Tibial artery (tissue), 4 donors: ENCODE measurements at regions of chr1 and their contacts with region 1.

Region 1: DNA sequence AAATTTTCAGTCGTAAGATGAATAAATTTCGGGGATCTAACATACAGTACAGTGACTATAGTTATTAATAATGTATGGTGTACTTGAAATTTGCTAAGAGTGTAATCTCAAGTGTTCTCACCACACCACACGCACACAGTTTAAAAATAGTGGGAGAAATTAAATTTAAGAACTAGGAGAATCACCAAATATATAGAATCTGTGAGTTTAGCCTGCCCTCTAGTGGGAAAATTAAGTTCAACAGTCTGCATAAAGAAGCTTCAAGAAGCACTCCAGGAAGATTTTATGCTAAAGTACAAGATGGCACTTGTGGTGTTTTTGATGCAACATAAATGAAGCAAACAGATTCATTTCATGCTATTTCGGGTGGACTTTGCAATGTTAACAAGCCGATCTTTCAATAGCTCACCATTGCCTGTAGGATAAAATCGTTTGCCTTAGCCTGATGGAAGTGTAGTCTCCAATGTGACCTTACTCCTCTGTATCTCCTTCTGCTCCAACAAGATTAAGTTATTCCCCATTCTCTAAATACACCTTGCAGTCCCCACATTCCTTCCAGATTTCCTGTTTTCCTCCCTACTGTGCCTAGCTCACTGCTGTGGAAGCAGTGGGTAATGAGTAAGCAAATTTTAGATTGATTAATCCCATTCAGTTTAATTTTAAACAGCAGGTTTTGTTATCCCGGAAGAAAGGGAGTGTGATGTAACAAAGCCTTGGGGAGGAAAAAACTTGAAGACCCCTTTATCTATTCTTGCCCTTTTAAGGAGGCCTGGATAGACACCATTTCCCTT is 8.7 kb upstream of the PIK3C2B start:
- DNase-seq: no peak
- H3K4me3 ChIP-seq: no peak overlapping the region
- H3K27ac ChIP-seq: no peak overlapping the region
- H3K4me1 ChIP-seq: peaks cover 0 to 15% (median 1%) of the 10 kb centered on the region in 4 donors
- H3K27me3 ChIP-seq: no peaks in the 10 kb centered on the region
- CTCF ChIP-seq: peak; percentile 72 to 86

Region 2: DNA sequence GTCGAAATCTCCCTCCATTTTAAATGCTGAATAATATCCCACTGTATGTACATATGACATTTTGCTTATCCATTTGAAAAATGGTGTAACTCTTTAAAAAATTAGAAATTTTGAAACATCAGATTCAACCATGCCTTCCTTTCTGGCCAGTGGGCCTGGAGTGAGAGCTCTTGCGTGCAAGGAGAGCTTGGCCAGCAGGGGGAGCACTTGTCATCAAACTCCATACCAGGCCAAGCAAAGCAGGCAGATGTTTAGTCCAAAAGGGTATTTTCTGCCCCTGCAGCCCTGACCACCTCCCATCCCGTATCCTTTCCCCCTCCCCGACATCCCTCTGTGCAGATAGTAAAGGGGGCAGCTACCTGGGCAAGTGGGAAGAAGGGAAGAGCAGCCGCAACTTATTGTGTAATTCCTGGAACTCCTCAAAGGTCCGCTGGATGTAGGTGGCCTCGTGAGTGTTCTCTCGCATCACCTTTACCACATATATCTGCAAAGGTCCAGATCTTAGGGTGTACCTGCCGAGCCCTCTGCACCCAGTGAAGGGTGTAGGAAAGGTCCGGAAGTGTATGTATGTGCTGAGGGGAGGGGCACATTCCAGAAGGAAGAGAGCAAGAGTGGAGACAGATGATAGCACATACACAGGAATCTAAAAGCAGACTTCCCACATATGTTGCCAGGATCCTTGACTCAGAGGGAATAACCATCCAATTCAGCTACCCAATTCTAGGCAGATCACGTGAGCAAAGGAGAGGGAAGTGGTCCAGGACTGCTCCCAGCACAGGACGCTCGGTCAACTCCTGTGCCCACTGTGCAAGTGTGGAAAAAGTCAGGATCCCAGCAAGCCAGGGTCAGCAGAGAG is 71.8 kb before region 1 on chr1:
- intact Hi-C with region 1: loop called (anchors 5 kb)
- DNase-seq: peak; percentile 84 to 88
- H3K4me3 ChIP-seq: no peak overlapping the region
- H3K27ac ChIP-seq: peak overlapping the region; percentile 23 to 51
- H3K4me1 ChIP-seq: peaks cover 0 to 25% (median 12%) of the 10 kb centered on the region in 4 donors
- H3K27me3 ChIP-seq: no peaks in the 10 kb centered on the region
- CTCF ChIP-seq: peak; percentile 87 to 92

Region 3: DNA sequence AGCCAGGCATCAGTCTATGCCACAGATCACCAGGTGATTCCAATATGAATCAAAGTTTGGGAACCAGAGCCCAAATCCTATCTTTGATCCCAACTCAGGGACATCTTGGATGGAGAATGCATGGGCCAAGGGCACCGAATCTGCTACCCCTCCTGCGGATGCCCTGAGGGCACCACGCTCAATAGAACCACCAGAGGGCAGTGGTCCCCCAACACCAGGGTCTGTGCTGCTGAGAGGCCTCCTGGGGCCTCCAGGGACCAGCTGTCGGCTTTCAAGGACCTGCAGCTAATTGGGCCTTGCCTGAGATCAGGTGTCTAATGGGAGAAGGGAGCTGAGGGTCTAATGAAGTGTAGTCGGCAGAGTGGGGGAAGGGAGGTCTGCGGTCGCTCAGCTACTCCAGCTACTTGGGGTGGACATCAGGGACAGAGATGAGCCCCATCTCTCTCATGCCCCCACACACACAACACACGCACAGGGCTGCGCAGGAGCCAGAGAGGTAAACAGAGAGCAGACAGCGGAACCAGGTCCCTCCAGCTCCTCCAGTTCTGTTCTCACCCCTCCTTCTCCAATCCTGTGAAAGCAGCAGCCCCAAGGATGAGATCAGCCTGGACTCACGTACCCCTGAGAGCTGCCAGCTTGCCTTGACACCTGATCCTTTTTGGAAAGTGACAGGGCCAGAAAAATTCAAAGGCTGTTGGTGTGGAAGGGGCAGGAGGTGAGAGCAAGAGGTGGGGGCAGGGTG is 56.8 kb before region 1 on chr1:
- intact Hi-C with region 1: loop called (anchors 5 kb)
- DNase-seq: peak in 1 of 2 donors; percentile 70
- H3K4me3 ChIP-seq: no peak overlapping the region
- H3K27ac ChIP-seq: peak overlapping the region; percentile 11 to 13
- H3K4me1 ChIP-seq: peaks cover 4 to 45% (median 31%) of the 10 kb centered on the region in 4 donors
- H3K27me3 ChIP-seq: no peaks in the 10 kb centered on the region
- CTCF ChIP-seq: peak; percentile 75 to 85